ENCODE measurements at regions of chr19 and their contacts with region 1.

Region 1: DNA sequence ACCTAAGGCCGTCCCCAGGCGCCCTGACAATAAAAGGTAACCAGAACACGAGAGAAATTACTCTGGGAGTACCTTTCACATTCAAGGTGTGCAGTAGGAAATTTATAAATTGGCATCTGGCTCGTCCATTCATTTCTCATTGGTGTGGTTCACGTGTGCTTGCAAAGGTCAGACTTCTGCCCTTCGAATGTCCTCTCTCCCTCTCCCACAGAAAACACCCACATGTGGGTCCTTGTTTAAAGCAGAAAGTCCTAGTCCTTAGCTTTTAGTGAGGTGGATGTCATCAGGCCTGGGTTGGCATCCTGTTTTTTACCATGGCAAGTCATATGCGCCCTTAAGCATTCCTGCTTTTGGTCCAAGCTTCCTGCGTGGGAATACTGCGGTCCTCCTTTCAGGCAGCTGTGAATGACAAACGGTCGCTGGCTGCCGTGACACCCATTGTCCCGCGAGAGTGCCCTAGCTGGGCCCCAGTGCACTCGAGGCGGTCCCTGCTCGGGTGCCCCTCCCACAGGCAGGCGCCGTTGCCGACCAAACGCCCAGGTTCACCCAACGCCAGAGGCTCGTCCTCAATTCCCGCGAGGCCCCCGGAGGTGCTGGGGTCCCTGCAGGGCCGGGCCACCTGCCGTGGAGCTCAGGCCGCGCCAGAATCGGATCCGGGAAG is at the start of gene NUDT19:
- DNase-seq: peak; percentile 80
- H3K4me3 ChIP-seq: peak within 1 kb of the TSS; percentile 65 to 85 (median 70)
- H3K27ac ChIP-seq: peak within 1 kb of the TSS; percentile 45
- H3K4me1 ChIP-seq: peaks cover 15% of the 10 kb centered on the region
- H3K27me3 ChIP-seq: no peaks in the 10 kb centered on the region
- CTCF ChIP-seq: no peak
- total RNA-seq, gene NUDT19: 16.8 to 21.2 TPM

Region 2: DNA sequence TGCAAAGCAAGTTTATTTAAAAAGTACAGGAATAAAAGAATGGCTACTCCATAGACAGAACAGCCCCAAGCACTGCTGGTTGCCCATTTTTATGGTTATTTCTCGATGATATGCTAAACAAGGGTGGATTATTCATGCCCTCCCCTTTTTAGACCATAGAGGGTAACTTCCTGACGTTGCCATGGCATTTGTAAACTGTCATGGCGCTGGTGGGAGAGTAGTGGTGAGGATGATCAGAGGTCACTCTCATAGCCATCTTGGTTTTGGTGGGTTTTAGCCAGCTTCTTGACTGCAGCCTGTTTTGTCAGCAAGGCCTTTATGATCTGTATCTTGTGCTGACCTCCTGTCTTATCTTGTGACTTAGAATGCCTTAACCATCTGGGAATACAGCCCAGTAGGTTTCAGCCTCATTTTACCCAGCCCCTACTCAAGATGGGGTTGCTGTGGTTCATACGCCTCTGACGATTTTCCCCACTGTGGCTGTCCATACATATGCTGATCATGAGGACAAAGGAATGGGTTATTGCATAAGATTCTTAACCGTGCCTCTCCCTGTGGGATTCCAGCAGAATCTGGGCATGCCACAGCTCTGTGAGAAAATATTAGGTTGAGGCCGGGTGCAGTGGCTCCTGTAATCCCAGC is 382.9 kb before region 1 on chr19:
- CTCF ChIA-PET with region 1: no interaction called
- dilution Hi-C with region 1: no loop called
- in situ Hi-C with region 1: no loop called
- intact Hi-C with region 1: no loop called
- DNase-seq: no peak
- H3K4me3 ChIP-seq: no peak overlapping the region
- H3K27ac ChIP-seq: no peak overlapping the region
- H3K4me1 ChIP-seq: no peaks in the 10 kb centered on the region
- H3K27me3 ChIP-seq: no peaks in the 10 kb centered on the region
- CTCF ChIP-seq: no peak

Region 3: DNA sequence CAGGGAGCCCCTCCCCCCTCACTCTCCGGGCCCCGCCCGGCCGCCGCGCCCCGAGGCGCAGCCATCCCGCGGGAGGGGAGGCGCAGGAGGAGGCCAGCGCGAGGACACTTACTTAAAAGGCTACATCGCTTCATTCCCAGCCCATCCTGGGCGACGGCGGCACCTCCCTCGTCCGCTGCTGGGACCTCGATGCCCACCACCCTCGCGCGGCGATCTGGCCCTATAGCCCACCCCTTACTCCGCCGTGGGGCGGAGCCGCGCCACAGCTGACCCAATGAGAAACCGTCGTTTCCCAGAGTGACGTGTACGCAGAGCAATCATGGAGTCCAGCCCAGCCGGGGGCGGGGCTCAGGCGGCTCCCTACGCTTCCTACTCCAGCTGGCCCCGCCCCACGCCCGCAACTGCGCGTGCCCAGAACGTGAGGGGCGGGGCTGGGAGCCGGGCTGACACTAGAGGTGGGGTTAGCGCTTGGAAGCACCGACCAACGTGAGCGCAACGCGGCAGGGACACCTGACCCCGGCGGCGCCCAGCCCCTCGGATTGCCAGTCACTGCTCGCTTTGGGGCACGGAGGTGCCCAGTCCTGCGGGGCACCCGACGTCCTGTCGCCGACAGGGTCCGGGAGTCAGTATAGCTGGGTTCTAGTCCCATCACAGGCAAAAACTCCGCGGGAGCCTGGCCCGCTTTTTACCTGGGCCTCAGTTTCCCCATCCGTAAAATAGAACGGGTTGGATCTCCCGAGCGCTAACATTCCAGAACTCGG is 16.3 kb before region 1 on chr19 and contains the start of gene ANKRD27:
- CTCF ChIA-PET with region 1: no interaction called
- dilution Hi-C with region 1: no loop called
- in situ Hi-C with region 1: no loop called
- intact Hi-C with region 1: loop called (anchors 2 kb)
- DNase-seq: peak; percentile 98
- H3K4me3 ChIP-seq: peak within 1 kb of the TSS; percentile 79 to 96 (median 94)
- H3K27ac ChIP-seq: peak within 1 kb of the TSS; percentile 52
- H3K4me1 ChIP-seq: peaks cover 12% of the 10 kb centered on the region
- H3K27me3 ChIP-seq: peaks cover 14% of the 10 kb centered on the region
- CTCF ChIP-seq: no peak
- total RNA-seq, gene ANKRD27: 26.7 to 34.1 TPM

Region 4: DNA sequence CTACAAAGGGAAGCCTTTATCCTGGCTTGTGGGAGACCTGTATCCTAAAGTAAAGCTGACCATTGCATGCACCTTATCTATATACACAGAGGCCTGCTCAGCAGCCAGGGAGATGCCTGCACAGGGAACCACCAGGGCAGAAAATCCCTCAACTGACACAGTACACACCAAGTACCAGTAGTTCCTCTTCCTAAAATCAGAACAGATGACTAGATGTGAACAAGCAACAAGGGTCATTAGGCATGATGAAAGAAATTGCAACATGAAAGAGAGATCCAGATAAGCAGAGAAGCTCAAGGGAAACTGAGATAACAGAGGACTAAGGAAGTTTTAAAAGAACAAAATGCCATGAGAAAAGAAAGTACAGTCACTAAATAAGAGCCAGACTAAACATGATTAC is 217.8 kb after region 1 on chr19:
- CTCF ChIA-PET with region 1: no interaction called
- dilution Hi-C with region 1: no loop called
- in situ Hi-C with region 1: no loop called
- intact Hi-C with region 1: loop called (anchors 5 kb)
- DNase-seq: no peak
- H3K4me3 ChIP-seq: no peak overlapping the region
- H3K27ac ChIP-seq: no peak overlapping the region
- H3K4me1 ChIP-seq: peaks cover 4% of the 10 kb centered on the region
- H3K27me3 ChIP-seq: no peaks in the 10 kb centered on the region
- CTCF ChIP-seq: no peak